Calu3 (cell line): ENCODE measurements at regions of chr1 and their contacts with region 1.

Region 1: DNA sequence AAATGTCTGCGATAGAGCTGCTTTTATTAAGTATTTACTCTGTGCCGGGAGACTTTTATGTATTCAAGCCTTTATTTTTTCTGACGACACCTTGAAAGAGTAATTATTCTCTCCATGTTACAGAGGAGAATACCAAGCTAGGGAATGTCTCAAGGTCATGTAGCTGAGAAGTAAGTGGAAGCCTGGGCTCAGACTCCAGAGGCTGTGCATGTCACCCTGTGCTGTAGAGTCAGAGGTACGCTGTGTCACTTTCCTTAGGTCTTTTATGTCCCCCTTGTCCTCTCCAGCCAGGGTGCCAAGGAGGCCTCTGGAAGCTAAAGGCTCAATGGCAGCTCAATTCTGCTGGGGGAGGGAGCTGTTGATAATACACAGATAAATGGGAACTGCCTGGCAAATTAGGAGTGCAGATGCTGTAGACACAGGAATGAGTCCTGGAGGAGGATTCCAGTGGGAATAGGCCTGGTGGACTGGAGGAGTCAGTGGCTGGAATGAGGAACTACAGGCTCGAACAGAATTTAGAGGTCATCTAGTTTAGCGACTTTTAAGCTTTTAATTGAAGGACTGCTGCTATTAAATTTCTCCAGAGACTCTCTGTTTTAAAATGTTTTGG is 9.3 kb upstream of the IL19 start:
- DNase-seq: no peak
- H3K4me3 Mint-ChIP-seq: no peak overlapping the region
- H3K27ac Mint-ChIP-seq: no peak overlapping the region
- H3K4me1 Mint-ChIP-seq: peaks cover 5% of the 10 kb centered on the region
- H3K27me3 Mint-ChIP-seq: peaks cover 26% of the 10 kb centered on the region
- CTCF ChIP-seq: no peak

Region 2: GRCh38 chr1:206453121-206453520 is 308.1 kb before region 1 on chr1:
- CTCF ChIA-PET with region 1: interaction called, 14 read pairs
- intact Hi-C with region 1: no loop called
- DNase-seq: no peak
- H3K4me3 Mint-ChIP-seq: no peak overlapping the region
- H3K27ac Mint-ChIP-seq: no peak overlapping the region
- H3K4me1 Mint-ChIP-seq: peaks cover 19% of the 10 kb centered on the region
- H3K27me3 Mint-ChIP-seq: no peaks in the 10 kb centered on the region
- CTCF ChIP-seq: no peak